MCF 10A (cell line): ENCODE measurements at regions of chr16 and their contacts with region 1.

Region 1: DNA sequence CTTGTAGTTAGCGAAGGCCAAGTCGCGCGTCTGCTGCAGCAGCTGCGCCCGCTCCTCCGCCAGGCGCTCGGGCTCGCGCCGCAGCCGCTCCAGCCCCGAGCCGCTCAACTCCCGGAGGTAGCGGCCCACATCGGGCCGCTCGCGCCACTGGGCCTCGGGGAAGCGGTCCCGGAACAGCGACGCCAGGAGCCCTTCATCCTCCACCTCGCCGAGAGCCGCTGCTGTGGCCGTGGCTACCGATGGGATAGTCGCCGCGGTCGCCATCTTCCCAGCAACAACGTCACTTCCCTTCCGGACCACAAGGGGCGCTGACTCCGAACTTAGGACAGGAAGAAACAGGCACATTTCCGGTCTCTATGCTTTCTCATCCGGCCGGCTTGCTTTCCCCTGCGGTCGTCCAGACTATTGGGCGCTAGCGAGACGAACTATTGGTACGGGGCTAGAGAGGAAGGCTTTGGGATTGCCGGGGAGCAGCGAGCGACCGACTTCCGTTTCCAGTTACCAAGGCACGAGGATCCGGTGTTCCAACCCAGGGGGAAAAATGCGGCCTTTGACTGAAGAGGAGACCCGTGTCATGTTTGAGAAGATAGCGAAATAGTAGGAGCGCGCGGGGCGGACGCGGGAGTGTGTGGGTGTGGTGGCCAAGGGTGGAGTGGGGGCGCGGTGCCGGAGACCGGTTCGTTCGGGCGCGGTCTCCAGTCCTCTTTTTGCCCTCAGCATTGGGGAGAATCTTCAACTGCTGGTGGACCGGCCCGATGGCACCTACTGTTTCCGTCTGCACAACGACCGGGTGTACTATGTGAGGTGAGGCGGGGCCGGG is at the starts of genes COG8 and NIP7:
- DNase-seq: peak; percentile 99
- H3K4me3 Mint-ChIP-seq: peak within 1 kb of the TSS; percentile 88
- H3K27ac Mint-ChIP-seq: peak within 1 kb of the TSS; percentile 95
- H3K4me1 Mint-ChIP-seq: peaks cover 5% of the 10 kb centered on the region
- H3K27me3 Mint-ChIP-seq: no peaks in the 10 kb centered on the region
- CTCF ChIP-seq: peak; percentile 76
- total RNA-seq, gene COG8: 29.3 and 33.3 TPM in 2 replicates
- total RNA-seq, gene NIP7: 55.4 and 62.1 TPM in 2 replicates

Region 2: GRCh38 chr16:68179196-68179795 is 1160.2 kb before region 1 on chr16:
- CTCF ChIA-PET with region 1: no interaction called
- POLR2A ChIA-PET with region 1: no interaction called
- intact Hi-C with region 1: no loop called
- DNase-seq: no peak
- H3K4me3 Mint-ChIP-seq: no peak overlapping the region
- H3K27ac Mint-ChIP-seq: no peak overlapping the region
- H3K4me1 Mint-ChIP-seq: no peaks in the 10 kb centered on the region
- H3K27me3 Mint-ChIP-seq: no peaks in the 10 kb centered on the region
- CTCF ChIP-seq: no peak

Region 3: GRCh38 chr16:69318911-69319289 is 20.6 kb before region 1 on chr16:
- CTCF ChIA-PET with region 1: no interaction called
- POLR2A ChIA-PET with region 1: no interaction called
- intact Hi-C with region 1: no loop called
- DNase-seq: no peak
- H3K4me3 Mint-ChIP-seq: no peak overlapping the region
- H3K27ac Mint-ChIP-seq: no peak overlapping the region
- H3K4me1 Mint-ChIP-seq: peaks cover under 1% of the 10 kb centered on the region
- H3K27me3 Mint-ChIP-seq: no peaks in the 10 kb centered on the region
- CTCF ChIP-seq: no peak

Region 4: GRCh38 chr16:69351309-69352027 is 12.0 kb after region 1 on chr16 and contains the start of gene TMED6:
- CTCF ChIA-PET with region 1: interaction called, 5 read pairs
- POLR2A ChIA-PET with region 1: interaction called, 12 read pairs
- intact Hi-C with region 1: no loop called
- DNase-seq: no peak
- H3K4me3 Mint-ChIP-seq: no peak within 1 kb of the TSS
- H3K27ac Mint-ChIP-seq: no peak within 1 kb of the TSS
- H3K4me1 Mint-ChIP-seq: no peaks in the 10 kb centered on the region
- H3K27me3 Mint-ChIP-seq: no peaks in the 10 kb centered on the region
- CTCF ChIP-seq: no peak
- total RNA-seq, gene TMED6: 0.51 and 1.2 TPM in 2 replicates

Region 5: DNA sequence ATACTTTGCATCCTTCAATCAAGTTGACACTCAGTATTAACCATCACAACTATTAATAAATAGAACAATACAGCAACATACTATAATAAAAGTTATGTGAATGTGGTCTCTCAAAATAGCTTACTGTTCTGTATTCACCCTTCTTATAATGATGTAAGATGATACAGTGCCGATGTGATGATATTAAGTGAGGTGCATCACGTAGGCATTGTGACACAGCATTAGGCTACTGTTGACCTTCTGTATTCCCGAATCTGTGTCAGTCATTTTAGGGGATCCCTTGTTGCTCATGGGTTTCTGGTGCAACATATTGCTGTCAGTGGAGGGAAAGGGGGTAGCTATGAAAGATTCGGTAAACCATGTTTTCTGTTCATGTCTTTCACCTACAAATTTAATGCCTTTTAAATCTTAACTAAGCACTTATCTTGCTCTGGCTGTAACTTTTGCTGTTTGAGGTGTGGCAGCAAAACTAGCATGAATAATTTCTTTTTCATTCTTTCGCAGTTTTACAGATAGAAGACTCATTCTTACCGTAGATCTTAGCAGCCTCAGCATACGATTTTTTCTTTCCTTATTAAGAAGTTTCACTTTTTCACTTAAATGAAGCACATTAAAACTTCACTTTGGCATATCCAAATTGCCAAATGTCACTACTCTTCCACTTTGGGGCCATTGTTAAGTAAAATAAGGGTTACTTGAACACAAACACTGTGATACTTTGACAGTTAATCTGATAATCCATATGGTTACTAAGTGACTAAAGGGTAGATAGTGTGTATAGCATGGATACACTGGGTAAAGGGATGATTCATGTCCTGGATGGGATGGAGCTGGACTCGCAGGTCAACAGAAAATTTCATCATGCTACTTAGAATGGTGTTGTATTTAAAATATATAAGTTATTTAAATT is 255.9 kb after region 1 on chr16:
- CTCF ChIA-PET with region 1: no interaction called
- POLR2A ChIA-PET with region 1: no interaction called
- intact Hi-C with region 1: loop called (anchors 5 kb)
- DNase-seq: peak; percentile 61
- H3K4me3 Mint-ChIP-seq: peak overlapping the region; percentile 16
- H3K27ac Mint-ChIP-seq: peak overlapping the region; percentile 40
- H3K4me1 Mint-ChIP-seq: peaks cover 31% of the 10 kb centered on the region
- H3K27me3 Mint-ChIP-seq: no peaks in the 10 kb centered on the region
- CTCF ChIP-seq: no peak